ENCODE measurements at regions of chr2 and their contacts with region 1.

Region 1: GRCh38 chr2:179373816-179374215 is 109.2 kb upstream of the SESTD1 start:
- DNase-seq: no peak
- H3K4me3 Mint-ChIP-seq: no peak overlapping the region
- H3K27ac Mint-ChIP-seq: no peak overlapping the region
- H3K4me1 Mint-ChIP-seq: peaks cover 5% of the 10 kb centered on the region
- H3K27me3 Mint-ChIP-seq: no peaks in the 10 kb centered on the region
- CTCF ChIP-seq: no peak

Region 2: DNA sequence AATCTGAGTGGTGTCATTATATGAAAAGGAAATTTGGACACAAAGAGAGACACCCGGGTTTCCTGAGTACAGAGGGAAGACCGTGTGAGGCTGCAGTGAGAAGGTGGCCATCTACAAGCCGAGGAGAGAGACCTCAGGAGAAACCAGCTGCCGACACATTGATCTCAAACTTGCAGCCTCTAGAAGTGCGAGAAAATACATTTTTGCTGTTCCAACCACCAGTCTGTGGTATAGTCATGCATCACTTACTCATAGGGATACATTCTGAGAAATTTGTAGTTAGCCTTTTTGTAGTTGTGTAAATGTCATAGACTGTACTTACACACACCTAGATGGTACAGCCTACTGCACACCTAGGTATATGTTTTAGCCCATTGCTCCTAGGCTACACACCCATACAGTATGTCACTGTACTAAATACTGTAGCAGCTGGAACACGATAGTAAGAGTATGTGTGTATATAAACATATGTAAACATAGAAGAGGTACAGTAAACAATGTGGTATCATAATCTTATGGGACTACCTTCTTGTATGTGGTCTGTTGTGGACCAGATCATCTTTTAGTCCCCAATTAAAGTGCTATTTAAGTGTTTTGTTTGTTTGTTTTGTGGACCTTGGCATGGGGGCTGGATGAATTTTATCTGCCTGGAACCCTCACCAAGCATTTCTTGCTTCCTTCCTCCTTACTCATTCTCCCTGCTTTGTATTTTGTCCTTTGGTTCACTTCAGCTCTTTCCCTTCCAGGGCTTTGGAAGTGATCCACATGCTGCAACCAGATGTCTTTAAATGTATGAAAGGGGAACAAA is 70.8 kb before region 1 on chr2:
- CTCF ChIA-PET with region 1: interaction called, 10 read pairs
- intact Hi-C with region 1: no loop called
- DNase-seq: no peak
- H3K4me3 Mint-ChIP-seq: no peak overlapping the region
- H3K27ac Mint-ChIP-seq: no peak overlapping the region
- H3K4me1 Mint-ChIP-seq: no peaks in the 10 kb centered on the region
- H3K27me3 Mint-ChIP-seq: no peaks in the 10 kb centered on the region
- CTCF ChIP-seq: no peak

Region 3: DNA sequence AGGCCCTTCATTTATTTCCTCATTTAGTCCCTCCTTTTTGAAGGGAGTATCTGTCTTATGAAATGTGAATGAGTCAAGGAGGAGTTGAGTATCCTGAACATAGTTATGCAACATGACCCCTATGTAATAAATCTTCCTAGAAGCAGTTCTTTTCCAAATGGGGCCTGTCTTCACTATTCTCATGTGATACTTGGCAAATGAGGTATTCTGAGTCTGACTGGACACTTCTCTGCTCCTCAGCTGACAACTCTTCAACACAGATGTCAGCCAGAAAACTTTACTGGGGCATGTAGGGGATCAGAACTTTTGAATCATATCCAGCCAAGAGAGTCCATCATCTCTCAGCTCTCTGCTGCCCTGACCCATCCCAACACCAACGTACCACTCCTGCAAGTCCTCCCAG is 196.0 kb after region 1 on chr2:
- CTCF ChIA-PET with region 1: no interaction called
- intact Hi-C with region 1: no loop called
- DNase-seq: no peak
- H3K4me3 Mint-ChIP-seq: no peak overlapping the region
- H3K27ac Mint-ChIP-seq: no peak overlapping the region
- H3K4me1 Mint-ChIP-seq: peaks cover 13% of the 10 kb centered on the region
- H3K27me3 Mint-ChIP-seq: no peaks in the 10 kb centered on the region
- CTCF ChIP-seq: no peak

Region 4: GRCh38 chr2:179580378-179581146 is 206.7 kb after region 1 on chr2:
- CTCF ChIA-PET with region 1: no interaction called
- intact Hi-C with region 1: no loop called
- DNase-seq: peak; percentile 74
- H3K4me3 Mint-ChIP-seq: no peak overlapping the region
- H3K27ac Mint-ChIP-seq: peak overlapping the region; percentile 63
- H3K4me1 Mint-ChIP-seq: peaks cover 21% of the 10 kb centered on the region
- H3K27me3 Mint-ChIP-seq: no peaks in the 10 kb centered on the region
- CTCF ChIP-seq: no peak